Heart right ventricle (tissue), 16 donors: ENCODE measurements at regions of chr12 and their contacts with region 1.

Region 1: GRCh38 chr12:52327052-52327829 is 6.0 kb upstream of the KRT83 start:
- DNase-seq: peak; percentile 53 to 61
- ATAC-seq: peak; percentile 63 to 90 (median 83)
- H3K4me3 ChIP-seq: no peak overlapping the region
- H3K27ac ChIP-seq: no peak overlapping the region
- H3K4me1 ChIP-seq: no peaks in the 10 kb centered on the region
- H3K27me3 ChIP-seq: peaks cover 0 to 37% (median 15%) of the 10 kb centered on the region in 7 donors
- CTCF ChIP-seq: peak; percentile 33 to 87 (median 71)

Region 2: GRCh38 chr12:52221912-52222457 is 105.3 kb before region 1 on chr12:
- intact Hi-C with region 1: loop called in 2 of 10 experiments (anchors 5 kb)
- DNase-seq: peak in 1 of 2 donors; percentile 49
- ATAC-seq: peak in 3 of 8 donors; percentile 31 to 57 (median 56)
- H3K4me3 ChIP-seq: no peak overlapping the region
- H3K27ac ChIP-seq: no peak overlapping the region
- H3K4me1 ChIP-seq: peaks cover 0 to 11% (median 5%) of the 10 kb centered on the region in 9 donors
- H3K27me3 ChIP-seq: peaks cover 0 to 42% (median 20%) of the 10 kb centered on the region in 7 donors
- CTCF ChIP-seq: peak; percentile 9 to 62 (median 50)

Region 3: DNA sequence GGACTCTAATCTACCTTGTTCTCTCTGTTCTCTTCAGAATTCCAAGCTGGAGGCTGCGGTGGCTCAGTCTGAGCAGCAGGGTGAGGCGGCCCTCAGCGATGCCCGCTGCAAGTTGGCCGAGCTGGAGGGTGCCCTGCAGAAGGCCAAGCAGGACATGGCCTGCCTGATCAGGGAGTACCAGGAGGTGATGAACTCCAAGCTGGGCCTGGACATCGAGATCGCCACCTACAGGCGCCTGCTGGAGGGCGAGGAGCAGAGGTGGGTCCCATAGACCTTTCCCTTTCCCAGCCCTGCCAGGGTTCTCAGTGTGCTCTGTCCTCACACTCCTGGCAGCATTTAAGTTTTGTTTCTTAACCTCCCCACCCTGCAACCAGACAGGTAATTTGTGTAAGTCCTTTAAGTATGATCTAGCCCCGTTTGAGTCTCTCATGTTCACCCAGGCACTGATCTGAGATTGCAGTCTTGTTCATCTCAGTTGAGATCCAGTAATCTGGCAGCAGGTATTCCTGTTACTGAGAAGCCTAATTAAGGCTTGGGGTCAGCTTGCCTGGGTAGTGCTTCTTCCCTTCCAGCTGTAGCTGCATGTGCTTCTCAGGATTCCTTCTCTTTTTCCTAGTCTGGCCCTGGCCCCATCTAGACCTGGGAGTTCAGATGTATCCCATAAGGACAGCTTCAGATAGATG is 21.1 kb before region 1 on chr12:
- intact Hi-C with region 1: loop called in 1 of 10 experiments (anchors 1 kb)
- DNase-seq: no peak
- ATAC-seq: no peak
- H3K4me3 ChIP-seq: no peak overlapping the region
- H3K27ac ChIP-seq: no peak overlapping the region
- H3K4me1 ChIP-seq: peaks cover 0 to 15% (median 7%) of the 10 kb centered on the region in 9 donors
- H3K27me3 ChIP-seq: peaks cover 0 to 62% (median 57%) of the 10 kb centered on the region in 7 donors
- CTCF ChIP-seq: peak in 7 of 9 donors; percentile 6 to 27 (median 19)